ENCODE measurements at regions of chr6 and their contacts with region 1.

Region 1: DNA sequence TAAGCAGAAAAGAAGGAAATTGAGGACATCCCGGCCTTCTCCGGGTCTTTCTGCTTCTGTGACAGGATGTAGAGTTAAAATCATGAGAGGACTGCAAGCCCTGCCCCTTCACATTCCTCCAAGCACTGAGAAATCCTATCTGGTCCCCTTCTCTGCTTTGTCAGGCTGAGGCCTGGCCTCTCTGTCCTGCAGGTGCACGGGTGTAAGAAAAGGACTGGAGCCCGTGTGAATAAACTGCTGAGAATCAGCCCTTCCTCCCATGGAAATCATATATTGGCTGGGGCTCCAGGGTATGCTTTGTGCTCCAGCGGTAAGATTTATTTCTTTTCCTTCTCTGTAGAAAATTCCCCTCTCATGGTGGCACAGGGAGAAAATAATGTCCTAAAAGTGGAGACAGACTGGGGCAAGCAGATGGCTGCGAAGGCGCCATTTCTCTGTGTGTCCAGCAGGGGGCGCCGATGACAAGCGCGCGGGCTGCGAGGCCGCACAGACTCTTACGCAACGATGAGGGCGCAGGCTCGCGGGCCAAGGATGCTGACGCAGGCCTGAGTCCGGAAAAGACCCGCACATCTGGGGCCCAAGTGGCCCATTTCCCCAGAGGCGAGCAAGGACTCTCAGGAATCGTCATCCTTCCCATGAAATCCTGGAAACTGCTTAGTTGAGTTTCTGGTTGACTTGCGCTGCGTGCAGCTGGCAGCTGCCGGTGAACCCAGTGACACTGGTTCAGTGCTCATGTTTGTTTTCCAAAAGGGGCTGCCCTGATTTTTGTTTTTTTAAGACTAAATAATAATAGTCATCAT is 258.6 kb downstream of the ADGB start:
- H3K4me3 Mint-ChIP-seq: peak overlapping the region; percentile 37
- H3K27ac Mint-ChIP-seq: peak overlapping the region; percentile 79
- H3K4me1 Mint-ChIP-seq: peaks cover 37% of the 10 kb centered on the region
- H3K27me3 Mint-ChIP-seq: no peaks in the 10 kb centered on the region

Region 2: DNA sequence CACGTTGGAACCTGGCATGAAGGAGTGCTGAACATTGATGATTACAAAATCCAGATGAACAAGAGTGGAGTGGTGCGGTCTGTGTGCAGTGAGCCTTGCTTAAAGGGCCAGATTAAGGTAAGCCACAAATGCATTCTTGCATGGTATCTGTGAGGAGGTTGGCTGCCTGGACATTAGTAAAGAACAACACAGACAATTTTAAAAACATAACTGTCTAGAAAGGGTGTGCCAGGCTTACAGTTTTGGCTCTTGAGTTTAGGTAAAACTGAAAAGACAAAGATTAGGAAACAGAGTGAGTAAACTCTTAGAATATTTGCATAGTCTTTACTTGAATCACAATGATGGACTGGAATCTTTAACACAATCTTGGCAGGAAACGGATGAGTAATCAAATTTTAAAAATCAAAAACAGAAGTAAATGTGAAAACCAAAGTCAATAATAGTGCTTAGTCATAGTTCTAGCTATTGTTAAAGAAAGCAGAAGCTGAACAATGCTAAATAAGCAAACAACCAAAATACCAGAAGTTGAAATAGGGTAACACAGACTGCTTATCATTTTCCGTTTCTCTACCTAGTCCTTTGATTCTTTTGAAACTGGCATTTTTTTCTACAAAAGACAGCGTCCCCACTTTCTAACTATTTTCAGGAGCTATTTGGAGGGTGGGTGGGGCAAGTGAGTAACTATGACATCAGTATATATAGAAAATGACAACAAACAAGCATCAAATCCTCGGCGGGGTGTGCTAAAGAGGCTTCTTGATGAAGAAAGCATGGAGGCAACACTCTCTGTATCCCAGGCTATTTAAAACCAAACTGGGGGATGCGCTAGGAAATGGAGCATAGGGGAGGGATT is 499.6 kb before region 1 on chr6:
- intact Hi-C with region 1: loop called (anchors 5 kb)
- H3K4me3 Mint-ChIP-seq: peak overlapping the region; percentile 65
- H3K27ac Mint-ChIP-seq: peak overlapping the region; percentile 90
- H3K4me1 Mint-ChIP-seq: peaks cover 60% of the 10 kb centered on the region
- H3K27me3 Mint-ChIP-seq: no peaks in the 10 kb centered on the region

Region 3: GRCh38 chr6:146896062-146896813 is 38.9 kb after region 1 on chr6:
- intact Hi-C with region 1: loop called (anchors 5 kb)
- H3K4me3 Mint-ChIP-seq: no peak overlapping the region
- H3K27ac Mint-ChIP-seq: no peak overlapping the region
- H3K4me1 Mint-ChIP-seq: peaks cover 24% of the 10 kb centered on the region
- H3K27me3 Mint-ChIP-seq: no peaks in the 10 kb centered on the region

Region 4: GRCh38 chr6:147202516-147203312 is 345.3 kb after region 1 on chr6:
- intact Hi-C with region 1: loop called (anchors 5 kb)
- H3K4me3 Mint-ChIP-seq: peak overlapping the region; percentile 85
- H3K27ac Mint-ChIP-seq: peak overlapping the region; percentile 94
- H3K4me1 Mint-ChIP-seq: peaks cover 35% of the 10 kb centered on the region
- H3K27me3 Mint-ChIP-seq: no peaks in the 10 kb centered on the region

Region 5: GRCh38 chr6:147285087-147285855 is 427.9 kb after region 1 on chr6:
- intact Hi-C with region 1: loop called (anchors 5 kb)
- H3K4me3 Mint-ChIP-seq: no peak overlapping the region
- H3K27ac Mint-ChIP-seq: peak overlapping the region; percentile 62
- H3K4me1 Mint-ChIP-seq: peaks cover 24% of the 10 kb centered on the region
- H3K27me3 Mint-ChIP-seq: no peaks in the 10 kb centered on the region

Region 6: GRCh38 chr6:148166339-148166968 is 1309.1 kb after region 1 on chr6:
- intact Hi-C with region 1: loop called (anchors 10 kb)
- H3K4me3 Mint-ChIP-seq: no peak overlapping the region
- H3K27ac Mint-ChIP-seq: no peak overlapping the region
- H3K4me1 Mint-ChIP-seq: no peaks in the 10 kb centered on the region
- H3K27me3 Mint-ChIP-seq: peaks cover 2% of the 10 kb centered on the region

Measured in dendritic cell treated with granulocyte-macrophage colony-stimulating factor and Interleukin-4, amounts not matched to agents 40 ng/mL and 50 ng/mL, for 4 days (primary cell).